PC-3 (cell line): ENCODE measurements at regions of chr10 and their contacts with region 1.

Region 1: DNA sequence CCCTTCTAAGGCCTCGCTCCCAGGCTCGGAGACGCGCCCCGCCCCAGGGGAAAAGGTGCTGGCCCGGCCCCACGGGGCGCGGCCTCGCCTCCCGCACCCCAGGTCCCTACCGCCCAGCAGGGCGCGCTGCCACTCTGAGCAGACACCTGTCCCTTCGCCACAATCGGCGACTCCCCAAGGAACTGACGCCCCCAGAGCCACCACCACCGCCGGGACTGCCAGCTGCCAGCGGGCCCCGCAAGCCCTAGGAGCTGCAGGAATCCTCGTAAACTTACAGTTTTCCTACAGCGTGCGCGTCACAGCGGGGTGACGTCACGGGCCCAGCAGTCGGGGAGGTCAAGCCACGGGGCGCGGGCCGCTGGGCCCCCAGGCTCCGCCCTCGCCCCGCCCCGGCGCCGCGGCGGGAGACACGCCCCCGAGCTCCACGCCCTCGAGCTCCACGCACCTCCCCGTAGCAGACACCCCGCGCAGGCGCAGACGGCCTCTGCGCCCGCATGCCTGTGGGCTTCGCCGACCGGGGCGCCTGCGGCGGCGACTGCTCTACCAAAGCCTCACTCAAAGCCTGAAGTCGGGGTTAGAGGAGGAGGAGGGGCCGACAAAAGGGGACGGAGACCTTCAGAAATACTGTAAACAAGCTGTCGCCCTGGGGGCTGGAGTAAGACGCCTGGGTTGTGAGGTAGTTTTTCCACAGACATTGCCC is at the start of gene ZNF438:
- DNase-seq: peak; percentile 91
- ATAC-seq: peak; percentile 73
- H3K4me3 ChIP-seq: peak within 1 kb of the TSS; percentile 72
- H3K27ac ChIP-seq: peak within 1 kb of the TSS; percentile 95
- H3K4me1 ChIP-seq: peaks cover 28% of the 10 kb centered on the region
- H3K27me3 ChIP-seq: no peaks in the 10 kb centered on the region
- CTCF ChIP-seq: peak; percentile 56
- total RNA-seq, gene ZNF438: 0.98 and 2.4 TPM in 2 replicates

Region 2: GRCh38 chr10:30783939-30784500 is 247.7 kb before region 1 on chr10:
- CTCF ChIA-PET with region 1: interaction called, 3 read pairs
- POLR2A ChIA-PET with region 1: interaction called, 3 read pairs
- intact Hi-C with region 1: loop called (anchors 5 kb)
- DNase-seq: peak; percentile 65
- ATAC-seq: peak; percentile 63
- H3K4me3 ChIP-seq: no peak overlapping the region
- H3K27ac ChIP-seq: no peak overlapping the region
- H3K4me1 ChIP-seq: peaks cover 16% of the 10 kb centered on the region
- H3K27me3 ChIP-seq: no peaks in the 10 kb centered on the region
- CTCF ChIP-seq: peak; percentile 82

Region 3: DNA sequence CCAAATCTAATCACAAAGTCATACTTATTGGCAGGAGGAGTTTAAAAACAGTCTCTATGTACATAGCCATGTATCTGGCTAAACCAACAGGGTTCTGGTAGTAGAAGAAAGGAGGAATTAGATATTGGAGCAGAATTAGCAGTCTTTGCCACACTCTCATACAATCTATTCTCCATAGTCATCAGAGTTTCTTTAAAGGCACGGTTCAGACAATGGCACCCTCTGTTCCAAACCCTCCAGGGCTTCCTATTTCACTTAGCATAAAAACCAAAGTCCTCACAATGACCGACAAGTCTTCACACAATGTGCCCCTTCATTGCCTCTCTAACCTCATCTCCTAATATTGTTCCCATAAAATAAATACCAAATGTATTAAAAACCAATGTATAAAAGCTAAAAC is 12.7 kb before region 1 on chr10:
- CTCF ChIA-PET with region 1: no interaction called
- POLR2A ChIA-PET with region 1: interaction called, 14 read pairs
- intact Hi-C with region 1: no loop called
- DNase-seq: no peak
- ATAC-seq: no peak
- H3K4me3 ChIP-seq: no peak overlapping the region
- H3K27ac ChIP-seq: no peak overlapping the region
- H3K4me1 ChIP-seq: no peaks in the 10 kb centered on the region
- H3K27me3 ChIP-seq: no peaks in the 10 kb centered on the region
- CTCF ChIP-seq: no peak

Region 4: DNA sequence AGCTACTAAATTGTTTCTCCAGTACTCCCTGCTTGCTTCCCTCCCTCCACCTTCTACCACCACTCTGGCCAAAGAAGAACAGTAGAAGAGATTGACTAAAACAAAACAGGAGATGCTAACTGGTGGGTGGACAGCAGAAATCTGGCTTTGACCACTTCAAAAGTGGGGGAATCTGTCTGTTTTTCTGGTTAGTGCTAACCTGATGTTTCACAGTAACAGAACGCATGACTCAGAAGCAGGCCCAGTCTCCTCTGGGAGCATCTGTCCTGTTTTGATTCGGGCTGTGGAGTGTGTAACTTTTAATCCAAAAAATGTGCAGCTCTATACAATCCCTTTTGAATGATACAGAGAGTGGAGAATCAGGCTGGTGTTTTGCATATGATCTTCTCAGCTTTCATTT is 32.6 kb after region 1 on chr10:
- CTCF ChIA-PET with region 1: no interaction called
- POLR2A ChIA-PET with region 1: no interaction called
- intact Hi-C with region 1: no loop called
- DNase-seq: no peak
- ATAC-seq: no peak
- H3K4me3 ChIP-seq: no peak overlapping the region
- H3K27ac ChIP-seq: no peak overlapping the region
- H3K4me1 ChIP-seq: peaks cover 2% of the 10 kb centered on the region
- H3K27me3 ChIP-seq: no peaks in the 10 kb centered on the region
- CTCF ChIP-seq: no peak

Region 5: DNA sequence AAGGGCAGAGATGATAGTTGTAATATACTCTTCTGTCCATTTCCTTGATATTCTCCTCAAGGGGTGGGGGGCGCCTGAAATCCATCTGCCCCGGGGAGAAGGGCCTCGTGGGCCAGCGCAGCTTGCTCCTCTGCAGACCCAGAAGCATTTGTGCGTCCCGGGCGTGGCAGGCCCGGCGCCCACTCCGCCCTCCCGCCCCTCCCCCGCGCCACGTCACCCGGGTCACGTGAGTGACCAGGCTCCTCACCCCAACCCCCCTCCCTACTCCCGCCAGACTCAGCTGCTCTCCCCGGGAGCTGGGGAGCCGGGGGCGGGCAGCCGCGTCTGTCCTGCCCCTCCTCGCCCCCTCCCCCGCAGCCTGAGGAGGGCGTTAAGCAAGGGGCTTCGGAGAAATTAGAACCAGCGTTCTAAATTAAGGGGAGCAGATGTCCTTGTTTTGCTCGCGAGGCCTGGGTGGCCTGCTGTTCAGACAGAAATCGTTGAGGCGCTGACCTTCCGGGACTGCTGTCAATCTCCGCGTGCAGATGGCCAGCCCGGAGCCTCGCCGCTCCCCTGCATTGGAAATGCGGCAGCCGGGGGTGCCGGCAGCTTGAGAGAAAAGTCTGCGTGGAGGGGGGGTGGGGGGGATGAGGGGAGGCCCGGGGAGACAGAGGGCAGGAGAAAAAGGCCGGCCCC is 102.1 kb after region 1 on chr10:
- CTCF ChIA-PET with region 1: interaction called, 6 read pairs
- POLR2A ChIA-PET with region 1: no interaction called
- intact Hi-C with region 1: loop called (anchors 1 kb)
- DNase-seq: no peak
- ATAC-seq: no peak
- H3K4me3 ChIP-seq: no peak overlapping the region
- H3K27ac ChIP-seq: no peak overlapping the region
- H3K4me1 ChIP-seq: peaks cover 11% of the 10 kb centered on the region; the same call in 1 of the 2 replicates
- H3K27me3 ChIP-seq: no peaks in the 10 kb centered on the region
- CTCF ChIP-seq: no peak

Region 6: GRCh38 chr10:31399631-31400030 is 367.9 kb after region 1 on chr10:
- CTCF ChIA-PET with region 1: no interaction called
- POLR2A ChIA-PET with region 1: no interaction called
- intact Hi-C with region 1: loop called (anchors 10 kb)
- DNase-seq: peak; percentile 12
- ATAC-seq: peak; percentile 69
- H3K4me3 ChIP-seq: no peak overlapping the region
- H3K27ac ChIP-seq: no peak overlapping the region
- H3K4me1 ChIP-seq: peaks cover 28% of the 10 kb centered on the region
- H3K27me3 ChIP-seq: no peaks in the 10 kb centered on the region
- CTCF ChIP-seq: no peak